B cell (primary cell): ENCODE measurements at regions of chr2 and their contacts with region 1.

Region 1: GRCh38 chr2:165203689-165204559 is at the start of gene SCN3A:
- DNase-seq: peak; percentile 73
- ATAC-seq: peak; percentile 62
- H3K4me3 ChIP-seq: peak within 1 kb of the TSS; percentile 23 to 71 (median 48)
- H3K4me3 Mint-ChIP-seq: peak within 1 kb of the TSS; percentile 68
- H3K27ac ChIP-seq: peak within 1 kb of the TSS in 1 of 2 donors; percentile 53
- H3K27ac Mint-ChIP-seq: peak within 1 kb of the TSS; percentile 12
- H3K4me1 ChIP-seq: peaks cover 9 to 28% of the 10 kb centered on the region in 2 donors
- H3K4me1 Mint-ChIP-seq: peaks cover 27% of the 10 kb centered on the region
- H3K27me3 ChIP-seq: no peaks in the 10 kb centered on the region
- H3K27me3 Mint-ChIP-seq: peaks cover 3% of the 10 kb centered on the region
- CTCF ChIP-seq: peak; percentile 83
- total RNA-seq, gene SCN3A: 6.0 and 6.1 TPM in 2 replicates

Region 2: DNA sequence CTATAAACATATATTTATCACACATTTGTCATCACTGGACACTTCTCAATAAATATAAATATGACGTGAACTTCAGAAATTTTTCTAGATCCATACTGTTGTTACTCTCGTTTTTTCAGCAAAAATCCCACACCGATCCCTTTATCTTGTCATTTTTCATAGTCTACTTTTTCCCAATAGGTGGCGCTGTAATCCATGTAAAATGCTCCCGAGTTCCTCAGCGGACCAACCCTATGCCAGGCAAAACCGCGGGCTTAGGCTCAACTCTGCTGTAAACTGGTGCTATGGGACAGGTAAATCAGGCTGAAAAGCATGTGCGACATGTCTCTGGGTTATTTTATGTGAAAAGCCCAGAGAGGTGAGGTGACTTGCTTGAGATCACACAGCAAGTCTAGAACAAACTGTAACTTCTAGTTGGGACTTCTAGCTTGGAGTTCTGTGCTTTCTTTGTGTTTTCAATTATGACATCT is 466.3 kb before region 1 on chr2:
- CTCF ChIA-PET with region 1: interaction called, 8 read pairs
- POLR2A ChIA-PET with region 1: no interaction called
- intact Hi-C with region 1: loop called (anchors 5 kb)
- DNase-seq: peak; percentile 86
- ATAC-seq: peak; percentile 68
- H3K4me3 ChIP-seq: peak overlapping the region in 1 of 5 experiments; percentile 1
- H3K4me3 Mint-ChIP-seq: peak overlapping the region; percentile 16
- H3K27ac ChIP-seq: no peak overlapping the region
- H3K27ac Mint-ChIP-seq: peak overlapping the region; percentile 16
- H3K4me1 ChIP-seq: peaks cover 24 to 40% of the 10 kb centered on the region in 2 donors
- H3K4me1 Mint-ChIP-seq: peaks cover 63% of the 10 kb centered on the region
- H3K27me3 ChIP-seq: no peaks in the 10 kb centered on the region
- H3K27me3 Mint-ChIP-seq: no peaks in the 10 kb centered on the region
- CTCF ChIP-seq: peak; percentile 91

Region 3: GRCh38 chr2:165015052-165015642 is 188.8 kb before region 1 on chr2:
- CTCF ChIA-PET with region 1: interaction called, 219 read pairs
- POLR2A ChIA-PET with region 1: no interaction called
- intact Hi-C with region 1: loop called (anchors 1 kb)
- DNase-seq: peak; percentile 70
- ATAC-seq: peak; percentile 44
- H3K4me3 ChIP-seq: no peak overlapping the region
- H3K4me3 Mint-ChIP-seq: no peak overlapping the region
- H3K27ac ChIP-seq: no peak overlapping the region
- H3K27ac Mint-ChIP-seq: peak overlapping the region; percentile 73
- H3K4me1 ChIP-seq: peaks cover 38 to 43% of the 10 kb centered on the region in 2 donors
- H3K4me1 Mint-ChIP-seq: peaks cover 10% of the 10 kb centered on the region
- H3K27me3 ChIP-seq: no peaks in the 10 kb centered on the region
- H3K27me3 Mint-ChIP-seq: peaks cover under 1% of the 10 kb centered on the region
- CTCF ChIP-seq: peak; percentile 84

Region 4: DNA sequence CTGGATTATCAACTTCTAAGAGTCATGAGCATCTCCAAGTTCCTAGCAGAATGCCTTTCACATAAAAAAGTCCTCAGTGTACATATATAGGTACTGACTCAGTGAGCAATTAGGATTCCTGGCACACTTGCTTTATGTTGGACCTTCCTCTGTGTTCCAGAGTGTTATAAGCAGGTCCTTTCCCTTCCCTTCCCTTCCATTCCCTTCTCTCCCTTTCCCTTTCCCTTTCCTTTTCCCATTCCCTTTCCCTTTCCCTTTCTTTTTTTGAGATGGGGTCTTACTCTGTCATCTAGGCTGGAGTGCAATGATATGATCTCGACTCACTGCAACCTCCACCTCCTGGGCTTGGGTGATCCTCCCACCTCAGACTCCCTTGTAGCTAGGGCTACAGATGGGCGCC is 48.8 kb before region 1 on chr2:
- CTCF ChIA-PET with region 1: interaction called, 10 read pairs
- POLR2A ChIA-PET with region 1: no interaction called
- intact Hi-C with region 1: no loop called
- DNase-seq: no peak
- ATAC-seq: no peak
- H3K4me3 ChIP-seq: no peak overlapping the region
- H3K4me3 Mint-ChIP-seq: no peak overlapping the region
- H3K27ac ChIP-seq: no peak overlapping the region
- H3K27ac Mint-ChIP-seq: no peak overlapping the region
- H3K4me1 ChIP-seq: peaks cover 0 to 2% of the 10 kb centered on the region in 2 donors
- H3K4me1 Mint-ChIP-seq: peaks cover 1% of the 10 kb centered on the region
- H3K27me3 ChIP-seq: no peaks in the 10 kb centered on the region
- H3K27me3 Mint-ChIP-seq: peaks cover 4% of the 10 kb centered on the region
- CTCF ChIP-seq: no peak

Region 5: DNA sequence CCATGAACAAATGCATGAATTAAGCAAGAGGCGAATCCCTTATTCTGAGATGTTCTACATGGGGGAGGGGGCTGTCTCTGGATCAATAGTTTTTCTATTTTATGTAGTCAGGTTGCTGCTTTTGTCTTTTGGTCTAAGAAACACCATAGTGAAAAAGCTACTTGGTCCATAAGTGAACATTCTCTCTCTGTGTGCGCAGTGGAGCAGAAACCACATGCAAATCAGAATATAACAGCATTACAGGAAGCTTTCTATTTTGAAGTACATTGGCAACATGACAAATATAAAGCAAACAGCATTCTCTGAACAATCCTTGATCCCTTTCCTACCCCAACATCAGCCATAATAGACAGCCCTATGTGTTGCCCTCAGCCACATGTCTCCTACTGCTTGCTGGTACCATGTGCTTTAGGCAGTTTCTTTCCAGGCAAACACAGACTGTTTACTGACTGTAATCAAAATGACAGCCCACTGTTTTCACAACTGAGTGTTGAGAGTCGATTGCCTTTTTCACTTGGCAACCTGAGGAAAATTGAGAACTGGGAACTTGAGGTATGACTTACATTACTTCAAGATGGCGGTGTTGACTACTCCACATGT is 10.6 kb before region 1 on chr2:
- CTCF ChIA-PET with region 1: interaction called, 17 read pairs
- POLR2A ChIA-PET with region 1: interaction called, 5 read pairs
- intact Hi-C with region 1: loop called (anchors 1 kb)
- DNase-seq: peak; percentile 71
- ATAC-seq: peak; percentile 92
- H3K4me3 ChIP-seq: peak overlapping the region in 2 of 5 experiments; percentile 1 to 30
- H3K4me3 Mint-ChIP-seq: peak overlapping the region; percentile 61
- H3K27ac ChIP-seq: peak overlapping the region; percentile 75 to 82
- H3K27ac Mint-ChIP-seq: peak overlapping the region; percentile 86
- H3K4me1 ChIP-seq: peaks cover 31 to 66% of the 10 kb centered on the region in 2 donors
- H3K4me1 Mint-ChIP-seq: peaks cover 47% of the 10 kb centered on the region
- H3K27me3 ChIP-seq: no peaks in the 10 kb centered on the region
- H3K27me3 Mint-ChIP-seq: peaks cover 3% of the 10 kb centered on the region
- CTCF ChIP-seq: no peak

Region 6: GRCh38 chr2:165251366-165251765 is 47.4 kb after region 1 on chr2:
- CTCF ChIA-PET with region 1: no interaction called
- POLR2A ChIA-PET with region 1: no interaction called
- intact Hi-C with region 1: no loop called
- DNase-seq: no peak
- ATAC-seq: no peak
- H3K4me3 ChIP-seq: no peak overlapping the region
- H3K4me3 Mint-ChIP-seq: no peak overlapping the region
- H3K27ac ChIP-seq: no peak overlapping the region
- H3K27ac Mint-ChIP-seq: no peak overlapping the region
- H3K4me1 ChIP-seq: no peaks in the 10 kb centered on the region
- H3K4me1 Mint-ChIP-seq: no peaks in the 10 kb centered on the region
- H3K27me3 ChIP-seq: no peaks in the 10 kb centered on the region
- H3K27me3 Mint-ChIP-seq: peaks cover 7% of the 10 kb centered on the region
- CTCF ChIP-seq: no peak

Region 7: GRCh38 chr2:165293440-165294353 is 89.8 kb after region 1 on chr2:
- CTCF ChIA-PET with region 1: interaction called, 3 read pairs
- POLR2A ChIA-PET with region 1: no interaction called
- intact Hi-C with region 1: loop called (anchors 2 kb)
- DNase-seq: peak; percentile 90
- ATAC-seq: peak; percentile 100
- H3K4me3 ChIP-seq: no peak overlapping the region
- H3K4me3 Mint-ChIP-seq: no peak overlapping the region
- H3K27ac ChIP-seq: no peak overlapping the region
- H3K27ac Mint-ChIP-seq: no peak overlapping the region
- H3K4me1 ChIP-seq: peaks cover 3 to 7% of the 10 kb centered on the region in 2 donors
- H3K4me1 Mint-ChIP-seq: peaks cover 3% of the 10 kb centered on the region
- H3K27me3 ChIP-seq: no peaks in the 10 kb centered on the region
- H3K27me3 Mint-ChIP-seq: peaks cover 9% of the 10 kb centered on the region
- CTCF ChIP-seq: peak; percentile 84